GM12878 (cell line): ENCODE measurements at regions of chr5 and their contacts with region 1.

Region 1: DNA sequence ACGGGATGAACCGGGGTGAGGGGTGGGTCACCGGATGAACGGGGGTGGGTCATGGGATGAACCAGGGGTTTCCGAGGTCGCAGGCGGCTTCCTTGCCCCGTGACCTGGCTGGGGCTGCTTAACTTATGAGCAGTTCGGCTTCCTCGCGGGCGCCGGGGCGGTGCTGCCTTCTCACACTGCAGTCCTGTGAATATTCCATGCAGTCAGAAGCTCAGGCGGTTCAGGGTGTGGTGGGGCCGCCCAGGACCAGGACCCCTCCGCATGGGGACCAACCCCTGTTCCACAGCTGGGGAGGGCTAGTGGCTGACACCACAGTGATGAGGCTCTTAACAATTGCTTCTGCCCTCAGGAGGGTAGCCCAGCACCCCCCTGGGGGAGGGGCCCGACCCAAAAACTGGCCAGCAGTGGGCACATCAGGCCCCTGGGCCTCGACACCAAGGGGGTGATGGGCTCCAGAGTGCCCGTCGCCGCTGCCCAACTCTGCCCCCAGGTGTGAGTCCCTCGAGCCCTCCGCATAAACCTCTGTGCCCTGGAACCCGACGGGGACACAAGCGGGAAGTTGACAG is 30.9 kb upstream of the SLC9A3 start:
- DNase-seq: no peak
- ATAC-seq: no peak
- H3K4me3 ChIP-seq: no peak overlapping the region
- H3K27ac ChIP-seq: no peak overlapping the region
- H3K4me1 ChIP-seq: no peaks in the 10 kb centered on the region
- H3K27me3 ChIP-seq: no peaks in the 10 kb centered on the region
- CTCF ChIP-seq: no peak
- EP300 ChIP-seq: no peak
- POLR2A ChIP-seq: no peak
- RAD21 ChIP-seq: no peak

Region 2: DNA sequence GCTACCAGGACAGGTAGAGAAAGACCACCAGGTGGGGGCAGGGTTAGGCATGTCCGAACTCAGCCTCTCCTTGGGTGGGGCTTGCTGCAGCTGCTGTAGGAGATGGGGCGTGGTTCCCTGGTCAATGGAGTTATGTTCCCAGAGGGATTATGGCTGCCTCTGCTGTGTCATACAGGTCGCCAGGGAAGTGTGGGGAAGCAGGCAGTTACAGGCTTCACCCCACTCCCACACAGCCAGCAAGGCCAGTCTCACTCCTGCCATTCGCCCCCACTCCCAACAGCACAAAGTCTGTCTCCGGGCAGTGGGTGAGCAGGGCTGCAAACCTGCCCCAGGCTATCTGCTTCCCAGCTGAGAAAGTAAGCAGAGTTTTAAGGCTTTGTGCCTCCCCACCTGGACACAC is 37.0 kb after region 1 on chr5:
- CTCF ChIA-PET with region 1: no interaction called
- POLR2A ChIA-PET with region 1: no interaction called
- RAD21 ChIA-PET with region 1: no interaction called
- SMC1A ChIA-PET with region 1: no interaction called
- in situ Hi-C with region 1: loop called (anchors 5 kb)
- intact Hi-C with region 1: no loop called
- DNase-seq: no peak
- ATAC-seq: no peak
- H3K4me3 ChIP-seq: no peak overlapping the region
- H3K27ac ChIP-seq: no peak overlapping the region
- H3K4me1 ChIP-seq: no peaks in the 10 kb centered on the region
- H3K27me3 ChIP-seq: no peaks in the 10 kb centered on the region; a peak in 2 of 4 replicates
- CTCF ChIP-seq: no peak
- EP300 ChIP-seq: no peak
- POLR2A ChIP-seq: no peak
- RAD21 ChIP-seq: no peak